ENCODE measurements at regions of chr2 and their contacts with region 1.

Region 1: DNA sequence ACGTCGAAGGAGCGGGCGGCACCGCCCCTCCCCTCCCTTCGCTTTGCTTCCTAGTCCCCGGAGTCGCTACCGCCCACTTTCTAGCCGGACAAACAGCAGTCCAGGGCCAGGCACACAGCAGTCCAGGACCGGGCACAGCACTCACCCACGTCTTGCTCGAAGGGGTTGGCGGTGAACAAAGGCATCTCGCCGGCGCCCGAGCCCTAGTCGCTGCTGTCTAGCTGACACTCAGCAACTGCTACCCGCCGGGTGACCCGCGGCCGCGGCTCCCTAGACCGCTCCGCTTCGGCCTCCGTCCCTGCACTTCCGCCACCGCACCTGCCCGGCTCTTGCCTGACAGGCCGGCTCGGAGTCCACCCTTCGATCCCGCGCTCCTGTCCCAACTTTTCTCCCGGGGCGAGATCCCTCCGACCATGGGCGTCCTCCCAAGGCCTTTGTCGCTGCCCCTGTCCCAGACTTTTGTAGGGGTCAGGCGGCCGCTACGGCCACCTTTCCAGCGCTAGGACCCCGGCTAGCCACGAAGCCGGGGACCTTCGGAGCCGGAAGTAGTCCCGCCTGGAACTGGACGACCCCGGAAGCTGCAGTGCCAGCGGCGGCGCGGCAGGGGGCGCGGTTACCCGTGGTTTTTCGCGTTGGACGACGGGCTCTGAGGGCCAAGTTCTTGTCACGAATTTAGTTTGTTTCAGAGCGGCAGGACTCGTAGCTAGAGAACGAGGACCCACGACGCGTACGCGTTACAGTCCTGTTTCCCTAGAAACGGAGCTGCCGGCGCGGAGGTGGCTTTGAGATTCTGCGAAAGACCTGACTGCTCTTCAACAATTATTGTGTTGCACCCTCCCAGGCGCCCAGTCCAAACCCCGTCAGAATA is at the start of gene STAM2:
- DNase-seq: peak; percentile 90
- H3K4me3 ChIP-seq: peak within 1 kb of the TSS; percentile 75 to 81 (median 80)
- H3K27ac ChIP-seq: peak within 1 kb of the TSS; percentile 83
- H3K4me1 ChIP-seq: peaks cover 26% of the 10 kb centered on the region
- H3K27me3 ChIP-seq: no peaks in the 10 kb centered on the region
- CTCF ChIP-seq: peak; percentile 90 to 98
- total RNA-seq, gene STAM2: 23.8 to 27.3 TPM

Region 2: DNA sequence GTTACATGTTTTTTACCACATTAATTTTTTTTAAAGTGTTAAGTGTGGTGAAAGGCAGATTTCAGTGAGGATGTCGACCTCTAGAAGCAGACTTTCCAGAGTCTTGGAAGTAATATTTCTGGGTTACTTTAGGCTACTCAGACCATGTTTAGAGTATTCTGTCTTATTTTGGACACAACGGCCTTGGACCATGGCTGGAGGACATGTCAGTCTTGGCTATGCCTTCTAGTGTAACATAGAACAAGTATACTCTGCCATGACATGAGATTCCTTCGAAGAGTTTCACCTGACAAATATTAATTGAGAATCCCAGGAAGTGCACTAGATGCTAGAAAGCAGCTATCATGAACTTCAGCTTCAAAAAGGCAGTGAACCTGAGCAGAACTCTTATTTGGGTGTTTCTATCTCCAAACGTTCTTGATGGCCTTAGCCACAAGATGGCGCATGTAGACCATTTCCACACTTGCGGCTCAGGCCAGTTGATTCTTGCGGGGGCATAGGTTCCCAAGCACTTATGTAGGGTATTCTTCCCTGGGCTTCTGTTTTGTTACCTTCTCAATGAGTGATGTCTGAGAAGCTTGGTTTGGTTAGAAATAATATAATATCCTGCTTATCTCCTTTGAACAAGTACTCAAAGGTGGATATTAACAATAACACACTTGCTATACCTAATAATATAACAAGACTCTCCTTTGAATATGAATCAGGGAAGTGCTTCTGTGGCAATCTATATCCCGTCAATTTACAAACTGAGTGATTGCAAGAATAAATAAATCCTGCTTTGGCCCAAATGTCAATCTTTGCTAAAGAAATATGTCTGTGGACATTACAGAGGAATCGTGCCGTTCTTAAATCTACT is 138.9 kb before region 1 on chr2:
- CTCF ChIA-PET with region 1: no interaction called
- dilution Hi-C with region 1: no loop called
- in situ Hi-C with region 1: loop called in 1 of 2 experiments (anchors 5 kb)
- intact Hi-C with region 1: loop called (anchors 1 kb)
- DNase-seq: peak; percentile 46
- H3K4me3 ChIP-seq: no peak overlapping the region
- H3K27ac ChIP-seq: no peak overlapping the region
- H3K4me1 ChIP-seq: no peaks in the 10 kb centered on the region
- H3K27me3 ChIP-seq: peaks cover 3% of the 10 kb centered on the region
- CTCF ChIP-seq: peak; percentile 85 to 89

Region 3: DNA sequence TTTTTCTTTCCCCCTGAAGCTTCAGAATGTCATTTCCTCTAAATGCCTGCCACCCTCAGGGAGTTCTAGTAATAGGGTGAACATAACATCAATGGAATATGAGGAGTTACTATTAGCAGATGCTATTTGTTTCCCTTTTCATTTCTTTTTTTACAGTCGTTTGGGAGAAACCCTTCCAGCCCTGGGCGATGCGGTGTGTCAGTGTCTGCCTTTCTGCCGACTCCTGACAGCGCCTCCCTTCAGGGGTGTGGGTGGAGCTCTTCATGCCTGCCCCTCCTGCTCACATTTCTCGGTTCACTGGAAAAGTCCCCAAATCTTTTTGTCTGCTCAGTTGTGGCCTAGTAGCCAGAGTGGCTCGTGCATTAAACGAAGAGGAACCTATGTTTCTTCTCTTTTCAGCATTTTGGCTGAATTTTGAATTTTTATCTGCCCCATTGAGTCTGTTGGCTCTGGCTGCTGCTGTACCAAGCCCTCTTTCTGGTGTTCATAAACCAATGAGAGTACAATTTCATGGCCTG is 231.6 kb after region 1 on chr2:
- CTCF ChIA-PET with region 1: no interaction called
- dilution Hi-C with region 1: no loop called
- in situ Hi-C with region 1: loop called in 1 of 2 experiments (anchors 25 kb)
- intact Hi-C with region 1: no loop called
- DNase-seq: peak; percentile 66
- H3K4me3 ChIP-seq: no peak overlapping the region
- H3K27ac ChIP-seq: no peak overlapping the region
- H3K4me1 ChIP-seq: peaks cover 35% of the 10 kb centered on the region
- H3K27me3 ChIP-seq: no peaks in the 10 kb centered on the region
- CTCF ChIP-seq: no peak

Region 4: DNA sequence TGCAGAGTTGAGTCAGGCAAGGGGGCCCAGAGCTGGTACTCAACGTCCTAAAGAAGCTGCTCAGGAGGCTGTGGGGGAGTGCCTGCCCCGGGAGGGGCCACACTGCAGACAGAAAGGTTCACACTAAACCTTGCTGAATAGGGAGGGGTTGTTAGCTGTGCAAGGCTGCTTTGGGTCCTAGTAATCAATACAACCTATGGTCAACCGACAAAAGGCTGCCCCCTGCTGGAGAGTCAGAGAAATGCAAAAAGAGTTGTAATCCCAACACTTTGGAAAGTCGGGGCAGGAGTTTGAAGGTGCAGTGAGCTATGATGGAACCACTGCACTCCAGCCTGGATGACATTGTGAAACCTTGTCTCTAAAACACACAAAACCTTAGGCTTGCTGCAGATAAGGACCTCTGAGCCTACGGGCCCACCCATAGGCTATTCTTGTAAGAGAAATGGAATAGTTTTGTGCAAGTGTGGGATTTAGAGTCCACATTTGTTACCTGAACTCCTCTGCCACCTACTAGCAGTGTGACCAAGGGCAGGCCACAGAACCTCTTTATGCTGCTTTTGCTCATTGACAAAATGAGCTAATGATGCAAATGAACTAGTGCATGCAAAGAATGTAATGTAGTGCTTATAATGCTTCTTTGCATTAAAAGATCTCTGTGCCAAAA is 460.1 kb after region 1 on chr2:
- CTCF ChIA-PET with region 1: no interaction called
- dilution Hi-C with region 1: no loop called
- in situ Hi-C with region 1: loop called in 1 of 2 experiments (anchors 5 kb)
- intact Hi-C with region 1: loop called (anchors 1 kb)
- DNase-seq: peak; percentile 42
- H3K4me3 ChIP-seq: no peak overlapping the region
- H3K27ac ChIP-seq: no peak overlapping the region
- H3K4me1 ChIP-seq: no peaks in the 10 kb centered on the region
- H3K27me3 ChIP-seq: no peaks in the 10 kb centered on the region
- CTCF ChIP-seq: peak; percentile 70 to 78

Region 5: GRCh38 chr2:152740743-152741328 is 565.1 kb after region 1 on chr2:
- CTCF ChIA-PET with region 1: no interaction called
- dilution Hi-C with region 1: no loop called
- in situ Hi-C with region 1: no loop called
- intact Hi-C with region 1: loop called (anchors 5 kb)
- DNase-seq: peak; percentile 43
- H3K4me3 ChIP-seq: no peak overlapping the region
- H3K27ac ChIP-seq: no peak overlapping the region
- H3K4me1 ChIP-seq: no peaks in the 10 kb centered on the region
- H3K27me3 ChIP-seq: no peaks in the 10 kb centered on the region
- CTCF ChIP-seq: peak; percentile 82 to 90

Measured in mammary epithelial cell (primary cell).